ENCODE measurements at regions of chr17 and their contacts with region 1.

Region 1: DNA sequence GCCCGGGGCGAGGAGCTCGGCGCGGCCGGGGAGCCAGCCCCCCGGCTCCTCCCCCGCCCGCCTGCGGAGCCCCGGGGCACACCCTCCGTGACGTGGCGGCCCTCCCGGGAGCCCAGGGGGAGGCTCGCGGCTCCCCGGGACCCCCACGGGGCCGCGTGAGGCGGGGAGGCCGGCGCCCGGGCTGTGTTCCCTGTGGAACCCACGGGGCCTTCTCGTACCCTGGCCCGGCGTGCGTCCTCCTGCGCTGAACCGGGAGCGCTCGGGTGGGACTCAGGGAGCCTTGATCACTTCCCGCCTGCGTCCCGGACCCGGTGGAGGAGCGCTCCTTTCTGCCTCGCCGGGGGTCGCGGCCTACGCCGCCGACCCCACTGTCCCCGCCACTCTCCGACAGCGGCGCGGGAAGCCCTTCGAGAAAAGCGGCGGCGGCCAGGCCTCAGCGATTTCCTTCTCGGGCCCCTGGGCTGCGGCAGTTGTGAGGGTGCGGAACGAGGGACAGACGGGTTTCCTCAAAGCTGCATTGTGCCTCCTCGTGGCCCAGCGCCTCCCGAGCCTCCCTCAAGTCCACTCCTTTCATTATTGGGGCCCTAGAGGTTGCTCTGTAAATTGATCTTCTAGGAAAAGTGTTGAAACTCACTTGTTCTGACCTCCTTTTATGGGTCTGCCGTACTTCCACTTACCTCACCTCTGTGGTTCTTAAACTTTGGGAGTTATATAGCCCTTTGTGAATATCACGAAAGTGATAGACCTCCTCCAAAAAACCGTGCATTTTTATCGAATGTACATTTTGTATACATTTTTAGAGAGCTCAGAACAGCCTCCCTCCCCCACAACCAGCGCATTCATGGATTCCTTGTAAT is 597 bp downstream of the LIG3 start:
- DNase-seq: peak; percentile 47 to 53
- ATAC-seq: peak; percentile 89 to 93
- H3K4me3 ChIP-seq: peak overlapping the region; percentile 81 to 99 (median 86)
- H3K27ac ChIP-seq: peak overlapping the region; percentile 92 to 98 (median 96)
- H3K4me1 ChIP-seq: peaks cover 16 to 30% of the 10 kb centered on the region in 2 donors
- H3K27me3 ChIP-seq: no peaks in the 10 kb centered on the region
- CTCF ChIP-seq: peak in 1 of 5 experiments; percentile 30
- POLR2A ChIP-seq: no peak

Region 2: DNA sequence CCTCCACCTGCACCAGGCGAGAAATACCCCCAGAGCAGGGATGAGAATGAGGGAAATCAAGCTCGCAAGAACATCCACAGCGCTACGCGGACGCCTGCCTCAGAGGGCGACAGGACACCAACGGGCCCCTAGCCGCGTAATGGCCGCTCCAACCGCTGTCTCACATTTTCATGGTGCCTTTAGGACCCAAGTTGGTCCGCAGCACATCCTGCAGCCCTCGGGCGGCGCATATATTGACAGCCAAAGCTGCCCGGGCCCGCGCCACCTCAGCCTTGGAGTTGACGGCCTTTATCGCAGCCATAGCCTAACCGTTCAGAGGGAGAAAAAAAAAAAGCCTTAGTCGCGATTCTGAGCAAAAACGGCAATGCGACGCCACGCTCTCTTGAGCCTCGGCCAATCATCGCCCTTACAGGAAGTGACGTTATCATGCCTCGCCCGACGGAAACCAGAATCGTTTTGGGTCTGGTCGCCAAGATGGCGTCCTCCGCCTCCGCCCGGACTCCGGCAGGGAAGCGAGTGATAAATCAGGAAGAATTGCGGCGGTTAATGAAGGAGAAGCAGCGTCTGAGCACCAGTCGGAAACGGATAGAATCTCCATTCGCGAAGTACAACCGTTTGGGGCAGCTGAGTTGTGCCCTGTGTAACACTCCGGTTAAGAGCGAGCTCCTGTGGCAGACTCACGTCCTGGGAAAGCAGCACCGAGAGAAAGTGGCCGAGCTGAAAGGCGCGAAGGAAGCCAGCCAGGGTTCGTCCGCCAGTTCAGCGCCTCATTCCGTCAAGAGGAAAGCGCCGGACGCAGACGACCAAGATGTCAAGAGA is 19.6 kb before region 1 on chr17 and contains the starts of genes CCT6B and ZNF830:
- in situ Hi-C with region 1: no loop called
- intact Hi-C with region 1: loop called (anchors 1 kb)
- DNase-seq: peak; percentile 86 to 89
- ATAC-seq: peak; percentile 99 to 100
- H3K4me3 ChIP-seq: peak within 1 kb of the TSS; percentile 77 to 97 (median 92)
- H3K27ac ChIP-seq: peak within 1 kb of the TSS; percentile 90 to 98 (median 93)
- H3K4me1 ChIP-seq: peaks cover 23 to 26% of the 10 kb centered on the region in 2 donors
- H3K27me3 ChIP-seq: no peaks in the 10 kb centered on the region
- CTCF ChIP-seq: no peak
- POLR2A ChIP-seq: peak; percentile 51 to 60
- total RNA-seq, gene CCT6B: 1.4 to 5.4 (median 2.8) TPM
- total RNA-seq, gene ZNF830: 6.0 to 11.0 (median 7.2) TPM

Region 3: GRCh38 chr17:35063514-35064223 is 82.8 kb after region 1 on chr17 and contains the start of gene RFFL:
- in situ Hi-C with region 1: no loop called
- intact Hi-C with region 1: loop called (anchors 5 kb)
- DNase-seq: peak; percentile 93 to 95
- ATAC-seq: peak; percentile 99 to 100
- H3K4me3 ChIP-seq: peak within 1 kb of the TSS; percentile 47 to 57 (median 54)
- H3K27ac ChIP-seq: peak within 1 kb of the TSS; percentile 87 to 97 (median 90)
- H3K4me1 ChIP-seq: peaks cover 13 to 30% of the 10 kb centered on the region in 2 donors
- H3K27me3 ChIP-seq: no peaks in the 10 kb centered on the region
- CTCF ChIP-seq: peak in 1 of 5 experiments; percentile 13
- POLR2A ChIP-seq: peak; percentile 59 to 75
- total RNA-seq, gene RFFL: 17.4 to 65.7 (median 35.0) TPM

Region 4: DNA sequence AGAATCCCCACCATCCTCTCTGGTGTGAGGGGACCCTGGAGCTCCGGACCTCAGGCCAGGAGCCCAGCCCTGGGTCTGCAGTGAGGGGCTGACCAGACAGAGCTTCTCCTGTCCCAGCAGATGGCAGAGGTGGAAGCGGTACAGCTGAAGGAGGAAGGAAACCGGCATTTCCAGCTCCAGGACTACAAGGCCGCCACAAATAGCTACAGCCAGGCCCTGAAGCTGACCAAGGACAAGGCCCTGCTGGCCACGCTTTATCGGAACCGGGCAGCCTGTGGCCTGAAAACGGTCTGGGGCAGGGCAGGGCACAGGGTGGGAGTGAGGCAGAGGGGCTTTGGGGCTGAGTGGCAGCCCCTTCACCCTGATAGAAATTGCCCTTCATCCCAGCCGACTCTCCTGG is 167.2 kb after region 1 on chr17:
- in situ Hi-C with region 1: no loop called
- intact Hi-C with region 1: loop called (anchors 2 kb)
- DNase-seq: peak in 1 of 2 donors; percentile 41
- ATAC-seq: peak; percentile 29 to 35
- H3K4me3 ChIP-seq: peak overlapping the region; percentile 53 to 64 (median 60)
- H3K27ac ChIP-seq: peak overlapping the region; percentile 94 to 98 (median 97)
- H3K4me1 ChIP-seq: peaks cover 23 to 39% of the 10 kb centered on the region in 2 donors
- H3K27me3 ChIP-seq: no peaks in the 10 kb centered on the region
- CTCF ChIP-seq: peak in 1 of 5 experiments; percentile 5
- POLR2A ChIP-seq: no peak

Region 5: GRCh38 chr17:35731239-35731931 is 750.5 kb after region 1 on chr17 and contains the start of gene RASL10B:
- in situ Hi-C with region 1: no loop called
- intact Hi-C with region 1: loop called (anchors 5 kb)
- DNase-seq: peak in 1 of 2 donors; percentile 46
- ATAC-seq: peak; percentile 46 to 74
- H3K4me3 ChIP-seq: peak within 1 kb of the TSS; percentile 53 to 78 (median 66)
- H3K27ac ChIP-seq: peak within 1 kb of the TSS; percentile 55 to 80 (median 74)
- H3K4me1 ChIP-seq: peaks cover 21 to 26% of the 10 kb centered on the region in 2 donors
- H3K27me3 ChIP-seq: no peaks in the 10 kb centered on the region
- CTCF ChIP-seq: no peak
- POLR2A ChIP-seq: no peak
- total RNA-seq, gene RASL10B: 4.7 to 13.8 (median 10.0) TPM